ENCODE measurements at regions of chr15 and their contacts with region 1.

Region 1: DNA sequence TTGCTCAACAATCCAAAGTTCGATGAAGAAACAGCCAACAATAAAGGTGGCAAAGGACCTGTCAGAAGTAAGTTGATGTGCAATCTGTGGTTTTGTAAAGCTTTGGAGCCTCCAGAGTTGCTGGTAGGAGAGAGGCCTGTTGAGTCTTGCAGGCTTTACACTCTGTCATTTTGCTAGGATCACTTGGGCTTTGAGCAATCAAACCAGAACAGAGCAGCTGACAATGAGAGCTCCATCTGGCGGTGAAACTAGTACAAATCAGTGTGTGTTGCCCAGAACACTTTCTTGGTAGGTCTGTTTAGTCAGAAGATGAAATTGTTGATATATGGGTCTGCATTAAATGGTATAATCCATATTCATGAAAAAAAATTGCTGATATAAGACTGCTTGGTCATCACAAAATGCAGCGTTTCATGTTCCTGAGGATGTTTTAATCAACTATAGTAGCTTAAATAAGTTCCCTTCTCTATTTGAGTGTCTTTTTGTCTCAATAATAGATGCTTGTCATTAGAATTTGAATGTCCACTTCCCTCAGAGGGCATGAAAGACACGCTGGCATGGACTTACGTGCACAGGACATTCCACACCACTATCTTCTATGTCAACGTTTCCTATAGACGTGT is 25.7 kb downstream of the TMOD2 start:
- DNase-seq: peak; percentile 77
- ATAC-seq: peak; percentile 82
- H3K4me3 Mint-ChIP-seq: no peak overlapping the region
- H3K27ac Mint-ChIP-seq: no peak overlapping the region
- H3K4me1 Mint-ChIP-seq: peaks cover 7% of the 10 kb centered on the region
- H3K27me3 Mint-ChIP-seq: no peaks in the 10 kb centered on the region

Region 2: DNA sequence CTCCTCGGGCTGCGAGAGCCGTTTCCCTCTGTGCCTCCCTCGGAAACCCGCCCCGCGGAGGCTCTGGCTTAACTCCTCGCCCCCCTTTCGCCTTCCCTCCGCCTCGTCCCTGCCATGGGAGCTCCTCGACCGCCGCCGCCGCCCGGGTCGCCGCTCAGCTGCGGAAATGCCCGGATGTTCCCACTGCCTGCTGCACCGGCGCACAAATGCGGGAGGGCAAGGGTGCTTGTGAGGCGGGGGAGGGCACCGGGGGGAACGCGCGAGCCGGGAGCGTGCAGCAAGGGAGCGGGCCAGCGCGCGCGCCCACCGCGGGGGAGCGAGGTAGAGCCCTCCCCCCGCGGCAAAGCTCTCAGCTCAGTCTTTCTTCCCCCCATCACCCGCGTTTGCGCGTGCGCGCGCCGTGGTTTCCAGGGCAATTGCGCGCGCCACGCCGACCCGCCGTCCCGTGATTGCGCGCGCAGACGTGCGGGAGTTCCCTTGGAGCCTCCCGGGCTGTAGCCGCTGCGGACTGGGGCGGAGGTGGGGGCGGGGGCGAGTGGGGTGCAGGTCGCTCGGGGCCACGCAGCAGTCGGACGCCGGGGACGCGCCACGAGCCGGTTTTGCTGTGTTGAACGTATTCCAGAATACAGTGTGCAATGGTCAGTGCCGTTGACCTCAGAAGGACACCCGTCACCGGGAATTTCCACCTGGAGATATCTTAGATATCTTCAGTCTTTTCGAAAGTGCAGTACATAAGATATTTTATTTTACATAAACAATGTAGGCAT is 154.3 kb before region 1 on chr15 and contains the start of gene DMXL2:
- CTCF ChIA-PET with region 1: interaction called, 13 read pairs
- DNase-seq: peak; percentile 80
- ATAC-seq: peak; percentile 76
- H3K4me3 Mint-ChIP-seq: peak within 1 kb of the TSS; percentile 83
- H3K27ac Mint-ChIP-seq: peak within 1 kb of the TSS; percentile 76
- H3K4me1 Mint-ChIP-seq: peaks cover 21% of the 10 kb centered on the region
- H3K27me3 Mint-ChIP-seq: peaks cover 44% of the 10 kb centered on the region
- total RNA-seq, gene DMXL2: 7.3 to 10.4 TPM

Region 3: DNA sequence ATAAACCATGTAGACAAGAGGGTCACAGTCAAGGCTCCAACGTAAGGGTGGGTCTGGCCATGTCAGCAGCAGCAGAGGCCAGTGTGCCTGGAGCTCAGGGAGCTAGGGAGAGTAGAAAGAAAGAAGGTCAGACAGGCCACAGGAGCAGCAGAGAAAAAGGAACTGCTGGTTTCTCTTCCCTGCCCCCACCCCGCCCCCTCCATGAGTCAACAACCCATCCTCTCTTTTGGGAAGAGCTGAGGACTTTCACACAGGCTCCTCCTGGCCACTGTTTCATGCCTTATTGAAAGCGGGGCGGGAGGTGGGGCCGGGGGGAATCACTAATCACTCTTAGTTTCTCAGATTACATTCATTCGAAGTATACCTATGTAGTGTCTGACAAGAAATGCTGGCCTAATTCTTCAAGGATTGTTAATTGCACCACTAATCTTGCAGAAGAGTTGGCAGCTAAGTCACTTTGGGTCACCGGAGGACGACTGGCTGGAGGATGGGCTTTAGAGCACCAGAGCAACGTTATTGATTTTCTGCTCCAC is 104.8 kb before region 1 on chr15:
- CTCF ChIA-PET with region 1: interaction called, 10 read pairs
- DNase-seq: no peak
- ATAC-seq: no peak
- H3K4me3 Mint-ChIP-seq: no peak overlapping the region
- H3K27ac Mint-ChIP-seq: no peak overlapping the region
- H3K4me1 Mint-ChIP-seq: peaks cover 4% of the 10 kb centered on the region
- H3K27me3 Mint-ChIP-seq: peaks cover 19% of the 10 kb centered on the region

Region 4: GRCh38 chr15:51737280-51738017 is 39.6 kb before region 1 on chr15 and contains the start of gene LYSMD2:
- CTCF ChIA-PET with region 1: interaction called, 34 read pairs
- DNase-seq: peak; percentile 78
- ATAC-seq: peak; percentile 67
- H3K4me3 Mint-ChIP-seq: peak within 1 kb of the TSS; percentile 92
- H3K27ac Mint-ChIP-seq: peak within 1 kb of the TSS; percentile 87
- H3K4me1 Mint-ChIP-seq: peaks cover 47% of the 10 kb centered on the region
- H3K27me3 Mint-ChIP-seq: no peaks in the 10 kb centered on the region
- total RNA-seq, gene LYSMD2: 16.0 to 21.7 TPM

Region 5: GRCh38 chr15:51825701-51826100 is 48.6 kb after region 1 on chr15:
- CTCF ChIA-PET with region 1: interaction called, 10 read pairs
- DNase-seq: no peak
- ATAC-seq: no peak
- H3K4me3 Mint-ChIP-seq: no peak overlapping the region
- H3K27ac Mint-ChIP-seq: no peak overlapping the region
- H3K4me1 Mint-ChIP-seq: peaks cover 6% of the 10 kb centered on the region
- H3K27me3 Mint-ChIP-seq: no peaks in the 10 kb centered on the region

Region 6: GRCh38 chr15:51869070-51869425 is 92.0 kb after region 1 on chr15:
- CTCF ChIA-PET with region 1: no interaction called
- DNase-seq: no peak
- ATAC-seq: no peak
- H3K4me3 Mint-ChIP-seq: no peak overlapping the region
- H3K27ac Mint-ChIP-seq: no peak overlapping the region
- H3K4me1 Mint-ChIP-seq: peaks cover 9% of the 10 kb centered on the region
- H3K27me3 Mint-ChIP-seq: no peaks in the 10 kb centered on the region

Region 7: DNA sequence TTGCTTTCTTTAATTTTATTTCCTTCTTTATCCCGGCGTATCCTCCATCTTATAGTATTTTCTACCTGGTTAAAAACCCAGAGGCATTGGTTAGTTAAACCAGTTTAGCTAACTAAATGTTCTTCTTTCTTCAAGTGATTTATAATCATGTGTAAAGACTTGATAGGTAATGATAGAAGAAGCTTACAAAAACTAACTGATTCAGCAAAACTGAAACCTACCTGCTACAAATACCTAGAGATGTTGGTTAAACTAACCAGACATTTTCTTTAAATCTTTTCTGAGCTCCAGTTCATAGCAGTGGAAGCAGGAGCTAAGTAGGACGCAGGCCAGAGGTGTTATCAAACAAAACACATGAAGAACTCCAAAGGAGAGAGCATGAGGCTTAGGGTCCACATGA is 149.7 kb after region 1 on chr15:
- CTCF ChIA-PET with region 1: no interaction called
- DNase-seq: no peak
- ATAC-seq: no peak
- H3K4me3 Mint-ChIP-seq: no peak overlapping the region
- H3K27ac Mint-ChIP-seq: no peak overlapping the region
- H3K4me1 Mint-ChIP-seq: no peaks in the 10 kb centered on the region
- H3K27me3 Mint-ChIP-seq: no peaks in the 10 kb centered on the region

Measured in activated CD8-positive, alpha-beta memory T cell treated with anti-CD3 and anti-CD28 coated beads, Interleukin-2, amount 10 ng/mL, durations not matched to agents 7 days and 5 days (primary cell).